OCI-LY7 (cell line): ENCODE measurements at regions of chr7 and their contacts with region 1.

Region 1: GRCh38 chr7:121138262-121138933 is 149.9 kb downstream of the CPED1 start:
- DNase-seq: peak; percentile 76
- H3K4me3 ChIP-seq: peak overlapping the region; percentile 63
- H3K27ac ChIP-seq: peak overlapping the region; percentile 42
- H3K4me1 ChIP-seq: peaks cover 28% of the 10 kb centered on the region
- CTCF ChIP-seq: no peak

Region 2: DNA sequence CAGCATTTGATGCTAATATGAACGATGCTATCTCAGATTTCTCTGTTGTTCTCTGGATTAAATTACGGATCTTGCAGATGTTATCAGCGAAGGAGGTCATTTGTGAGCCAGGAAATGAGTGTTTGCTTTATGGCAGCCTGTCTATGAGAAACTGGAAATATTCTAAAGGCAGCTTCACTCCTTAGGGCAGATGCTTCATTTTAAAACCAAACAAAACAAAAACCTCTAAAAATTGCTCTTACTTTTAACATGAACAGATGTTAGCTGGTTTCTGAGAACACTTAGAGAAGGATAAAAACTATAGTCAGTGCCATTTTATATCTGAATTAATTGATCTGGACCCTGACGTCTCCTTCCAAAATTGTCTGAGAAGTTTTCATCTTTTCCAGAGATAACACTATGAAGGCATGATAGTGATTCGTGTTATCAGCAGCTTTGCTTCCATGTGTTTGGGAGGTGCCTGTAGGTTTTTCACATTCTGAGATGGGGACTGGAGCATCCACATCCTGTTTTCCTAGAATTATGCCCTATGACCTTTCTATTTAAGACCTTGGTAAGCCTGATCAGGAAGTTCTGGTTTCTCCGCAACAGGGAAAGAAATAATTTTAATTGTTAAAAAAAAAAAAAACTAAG is 96.8 kb before region 1 on chr7:
- CTCF ChIA-PET with region 1: no interaction called
- POLR2A ChIA-PET with region 1: no interaction called
- intact Hi-C with region 1: no loop called
- DNase-seq: no peak
- H3K4me3 ChIP-seq: no peak overlapping the region
- H3K27ac ChIP-seq: no peak overlapping the region
- H3K4me1 ChIP-seq: no peaks in the 10 kb centered on the region
- CTCF ChIP-seq: no peak

Region 3: GRCh38 chr7:121228779-121229178 is 90.4 kb after region 1 on chr7:
- CTCF ChIA-PET with region 1: no interaction called
- POLR2A ChIA-PET with region 1: no interaction called
- intact Hi-C with region 1: no loop called
- DNase-seq: no peak
- H3K4me3 ChIP-seq: no peak overlapping the region
- H3K27ac ChIP-seq: no peak overlapping the region
- H3K4me1 ChIP-seq: no peaks in the 10 kb centered on the region
- CTCF ChIP-seq: no peak

Region 4: DNA sequence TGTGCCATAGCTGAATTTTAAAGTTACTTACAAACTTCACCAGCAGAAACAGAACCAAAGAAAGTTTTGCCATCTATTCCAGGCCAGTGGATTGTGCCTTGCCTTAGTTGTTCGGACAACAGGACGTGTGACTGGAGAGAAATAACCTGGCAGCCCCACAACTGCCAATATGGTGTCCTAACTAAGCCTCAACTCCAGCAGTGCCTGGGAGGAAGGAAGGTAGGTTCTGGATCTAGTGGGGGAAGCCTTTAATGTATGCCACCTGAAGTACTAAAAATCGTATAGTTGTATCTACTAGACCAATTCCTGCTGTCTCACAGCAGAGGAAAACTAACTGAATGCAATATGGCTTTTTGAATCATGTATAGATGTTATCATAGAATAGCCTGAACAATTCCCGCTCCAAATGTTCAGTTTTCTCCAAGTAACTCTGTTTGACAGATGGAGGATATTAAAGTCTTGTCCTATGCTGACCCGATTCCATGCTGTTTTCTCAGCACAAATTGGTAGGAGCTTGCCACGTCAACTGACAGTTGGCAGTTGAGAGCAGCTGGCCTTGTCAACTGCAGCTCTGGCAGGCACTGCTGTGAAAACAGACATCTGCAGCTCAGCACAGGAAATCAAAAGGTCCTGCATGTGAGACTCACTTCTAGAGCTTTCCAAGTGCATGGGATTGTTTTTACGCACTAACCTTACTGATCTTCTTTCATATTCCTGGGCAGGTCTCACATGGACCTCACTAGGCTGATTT is 105.9 kb after region 1 on chr7:
- CTCF ChIA-PET with region 1: no interaction called
- POLR2A ChIA-PET with region 1: interaction called, 3 read pairs
- intact Hi-C with region 1: loop called (anchors 5 kb)
- DNase-seq: peak; percentile 87
- H3K4me3 ChIP-seq: no peak overlapping the region
- H3K27ac ChIP-seq: peak overlapping the region; percentile 68
- H3K4me1 ChIP-seq: peaks cover 18% of the 10 kb centered on the region
- CTCF ChIP-seq: no peak